Vagina (tissue), 2 donors: ENCODE measurements at regions of chr11 and their contacts with region 1.

Region 1: DNA sequence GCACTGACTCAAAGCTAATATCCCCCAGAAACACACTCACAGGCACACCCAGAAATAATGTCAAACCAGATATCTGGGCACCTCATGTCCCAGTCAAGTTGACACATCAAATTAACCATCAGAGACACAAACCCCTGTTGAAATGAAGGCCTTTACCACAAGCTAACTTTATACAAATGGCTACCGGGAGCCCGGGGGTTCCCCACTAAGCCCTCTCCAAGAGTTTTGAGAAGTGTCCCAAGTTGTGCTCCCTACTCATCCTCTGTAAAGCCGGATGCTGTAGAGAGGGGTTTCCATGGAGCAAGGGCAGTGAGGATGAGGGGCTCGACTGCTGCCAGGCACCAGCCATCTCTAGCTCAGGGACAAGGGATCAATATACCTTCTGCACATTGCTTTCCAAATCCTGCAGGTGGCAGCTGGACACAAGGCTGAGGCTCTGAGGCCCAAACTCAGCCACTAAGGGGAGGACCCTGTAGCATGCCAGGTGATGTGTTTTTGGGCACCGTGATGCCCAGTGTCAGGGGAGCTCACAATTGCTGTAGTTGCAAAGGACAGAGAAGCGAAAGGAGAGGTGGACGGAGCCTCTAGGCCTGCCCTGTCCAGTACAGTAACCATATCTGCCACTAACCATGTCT is 145.7 kb downstream of the TTC17 start:
- DNase-seq: peak in 1 of 2 donors; percentile 74
- H3K4me3 ChIP-seq: no peak overlapping the region
- H3K27ac ChIP-seq: no peak overlapping the region
- H3K4me1 ChIP-seq: no peaks in the 10 kb centered on the region
- H3K27me3 ChIP-seq: no peaks in the 10 kb centered on the region
- CTCF ChIP-seq: peak in 1 of 3 experiments; percentile 21
- POLR2A ChIP-seq: no peak

Region 2: GRCh38 chr11:43567396-43567975 is 63.1 kb after region 1 on chr11:
- intact Hi-C with region 1: loop called (anchors 10 kb)
- DNase-seq: no peak
- H3K4me3 ChIP-seq: no peak overlapping the region
- H3K27ac ChIP-seq: no peak overlapping the region
- H3K4me1 ChIP-seq: no peaks in the 10 kb centered on the region
- H3K27me3 ChIP-seq: no peaks in the 10 kb centered on the region
- CTCF ChIP-seq: no peak
- POLR2A ChIP-seq: no peak